Common myeloid progenitor, CD34-positive (primary cell): ENCODE measurements at regions of chr1 and their contacts with region 1.

Region 1: GRCh38 chr1:35564037-35564883 is 6.7 kb downstream of the NCDN start:
- DNase-seq: peak; percentile 76 to 86 (median 77)
- H3K4me3 ChIP-seq: no peak overlapping the region
- H3K27ac ChIP-seq: no peak overlapping the region
- H3K4me1 ChIP-seq: peaks cover 0 to 24% (median 15%) of the 10 kb centered on the region in 4 experiments
- H3K27me3 ChIP-seq: no peaks in the 10 kb centered on the region

Region 2: DNA sequence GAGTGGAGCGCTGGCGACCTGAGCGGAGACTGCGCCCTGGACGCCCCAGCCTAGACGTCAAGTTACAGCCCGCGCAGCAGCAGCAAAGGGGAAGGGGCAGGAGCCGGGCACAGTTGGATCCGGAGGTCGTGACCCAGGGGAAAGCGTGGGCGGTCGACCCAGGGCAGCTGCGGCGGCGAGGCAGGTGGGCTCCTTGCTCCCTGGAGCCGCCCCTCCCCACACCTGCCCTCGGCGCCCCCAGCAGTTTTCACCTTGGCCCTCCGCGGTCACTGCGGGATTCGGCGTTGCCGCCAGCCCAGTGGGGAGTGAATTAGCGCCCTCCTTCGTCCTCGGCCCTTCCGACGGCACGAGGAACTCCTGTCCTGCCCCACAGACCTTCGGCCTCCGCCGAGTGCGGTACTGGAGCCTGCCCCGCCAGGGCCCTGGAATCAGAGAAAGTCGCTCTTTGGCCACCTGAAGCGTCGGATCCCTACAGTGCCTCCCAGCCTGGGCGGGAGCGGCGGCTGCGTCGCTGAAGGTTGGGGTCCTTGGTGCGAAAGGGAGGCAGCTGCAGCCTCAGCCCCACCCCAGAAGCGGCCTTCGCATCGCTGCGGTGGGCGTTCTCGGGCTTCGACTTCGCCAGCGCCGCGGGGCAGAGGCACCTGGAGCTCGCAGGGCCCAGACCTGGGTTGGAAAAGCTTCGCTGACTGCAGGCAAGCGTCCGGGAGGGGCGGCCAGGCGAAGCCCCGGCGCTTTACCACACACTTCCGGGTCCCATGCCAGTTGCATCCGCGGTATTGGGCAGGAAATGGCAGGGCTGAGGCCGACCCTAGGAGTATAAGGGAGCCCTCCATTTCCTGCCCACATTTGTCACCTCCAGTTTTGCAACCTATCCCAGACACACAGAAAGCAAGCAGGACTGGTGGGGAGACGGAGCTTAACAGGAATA is 13.1 kb after region 1 on chr1:
- CTCF ChIA-PET with region 1: interaction called, 10 read pairs
- POLR2A ChIA-PET with region 1: no interaction called
- DNase-seq: peak; percentile 91 to 99 (median 98)
- H3K4me3 ChIP-seq: peak overlapping the region; percentile 25 to 82 (median 67)
- H3K27ac ChIP-seq: peak overlapping the region in 1 of 2 experiments; percentile 55
- H3K4me1 ChIP-seq: peaks cover 3 to 51% (median 47%) of the 10 kb centered on the region in 4 experiments
- H3K27me3 ChIP-seq: peaks cover 0 to 6% (median 0%) of the 10 kb centered on the region in 5 experiments

Region 3: GRCh38 chr1:35605071-35605881 is 41.0 kb after region 1 on chr1:
- CTCF ChIA-PET with region 1: interaction called, 10 read pairs
- POLR2A ChIA-PET with region 1: no interaction called
- DNase-seq: no peak
- H3K4me3 ChIP-seq: no peak overlapping the region
- H3K27ac ChIP-seq: no peak overlapping the region
- H3K4me1 ChIP-seq: no peaks in the 10 kb centered on the region
- H3K27me3 ChIP-seq: no peaks in the 10 kb centered on the region

Region 4: DNA sequence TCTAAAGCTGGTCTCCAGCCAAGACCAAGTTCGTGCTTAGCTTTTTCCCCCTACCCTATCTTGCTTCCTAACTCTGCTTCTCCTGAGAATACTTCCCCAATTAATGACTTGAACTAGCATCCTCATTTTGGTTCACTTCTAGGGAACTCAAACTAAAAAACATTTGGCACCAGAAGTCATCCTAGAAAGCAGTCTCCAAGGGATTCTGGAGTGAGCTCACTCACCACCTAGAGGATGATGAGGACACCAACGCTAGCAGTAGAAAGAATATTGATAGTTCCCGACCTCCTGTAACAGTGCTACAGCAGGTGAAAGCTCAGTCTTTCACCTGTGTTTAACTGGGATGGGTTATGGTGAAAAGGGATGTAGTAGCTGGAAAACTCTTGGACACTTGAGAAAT is 81.8 kb after region 1 on chr1:
- CTCF ChIA-PET with region 1: interaction called, 15 read pairs
- POLR2A ChIA-PET with region 1: no interaction called
- DNase-seq: peak in 2 of 3 donors; percentile 32 to 41
- H3K4me3 ChIP-seq: no peak overlapping the region
- H3K27ac ChIP-seq: no peak overlapping the region
- H3K4me1 ChIP-seq: peaks cover 0 to 7% (median 2%) of the 10 kb centered on the region in 4 experiments
- H3K27me3 ChIP-seq: peaks cover 0 to 20% (median 13%) of the 10 kb centered on the region in 5 experiments